Activated T-helper 2 cell treated with anti-CD3 and anti-CD28 coated beads, Interferon-gamma antibody, Interleukin-2, Interleukin-4, amounts not matched to agents 10 μg/mL and 5 μg/mL and 100 μg/mL, durations not matched to agents 14 hours and 24 hours and 36 hours (primary cell): ENCODE measurements at regions of chr4 and their contacts with region 1.

Region 1: DNA sequence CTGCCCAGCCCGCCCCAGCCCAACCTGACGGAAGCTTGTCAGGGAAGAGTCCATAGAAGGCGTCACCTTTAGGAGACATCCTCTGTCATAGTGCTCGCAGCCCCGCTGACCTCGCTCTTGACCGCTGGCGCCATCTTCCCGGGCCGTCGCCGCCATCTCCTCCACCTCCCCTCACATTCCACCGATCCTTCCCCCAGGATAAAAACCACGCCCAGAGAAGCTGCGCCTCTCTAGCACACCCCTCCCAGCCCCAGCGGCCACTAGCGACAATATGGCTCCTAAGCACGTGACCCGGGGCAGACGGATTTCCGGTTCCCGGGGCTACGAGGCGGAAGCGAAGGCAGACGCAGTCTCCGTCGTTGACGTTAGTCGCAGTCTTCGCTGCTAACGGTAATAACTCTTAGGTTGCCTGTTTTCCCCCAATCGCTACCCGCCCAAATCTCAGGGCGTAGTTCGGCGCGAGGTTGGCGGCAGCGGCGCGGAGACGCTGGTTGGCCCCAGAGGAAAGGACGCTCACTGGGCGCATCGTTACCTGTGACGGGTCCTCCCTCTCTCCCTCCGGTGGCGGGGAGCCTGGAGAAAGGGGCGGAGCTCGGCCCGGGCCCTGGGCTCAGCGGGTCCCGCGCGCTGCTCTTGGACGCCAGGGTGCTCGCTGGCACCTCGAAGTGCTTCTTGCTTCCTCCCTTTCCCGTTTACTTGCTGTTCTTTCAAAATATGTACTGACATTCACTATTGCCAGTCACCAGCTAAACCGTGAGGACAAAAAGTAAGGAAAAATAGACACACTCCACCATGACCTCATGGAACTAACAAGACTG is at the starts of genes RCHY1 and THAP6:
- DNase-seq: peak; percentile 91
- H3K4me3 Mint-ChIP-seq: no peak within 1 kb of the TSS
- H3K27ac Mint-ChIP-seq: peak within 1 kb of the TSS; percentile 98
- H3K4me1 Mint-ChIP-seq: peaks cover 35% of the 10 kb centered on the region
- H3K27me3 Mint-ChIP-seq: no peaks in the 10 kb centered on the region
- total RNA-seq, gene RCHY1: 22.9 and 25.4 TPM in 2 replicates
- total RNA-seq, gene THAP6: 17.6 and 18.4 TPM in 2 replicates

Region 2: GRCh38 chr4:76148142-76148865 is 634.0 kb after region 1 on chr4 and contains the start of gene NUP54:
- intact Hi-C with region 1: loop called (anchors 1 kb)
- DNase-seq: peak; percentile 94
- H3K4me3 Mint-ChIP-seq: peak within 1 kb of the TSS; percentile 89
- H3K27ac Mint-ChIP-seq: peak within 1 kb of the TSS; percentile 94
- H3K4me1 Mint-ChIP-seq: peaks cover 23% of the 10 kb centered on the region
- H3K27me3 Mint-ChIP-seq: no peaks in the 10 kb centered on the region
- total RNA-seq, gene NUP54: 74.7 and 75.6 TPM in 2 replicates